HEK293 (cell line): ENCODE measurements at regions of chr9 and their contacts with region 1.

Region 1: GRCh38 chr9:115117999-115118878 is at the start of gene TNC:
- H3K4me3 ChIP-seq: peak within 1 kb of the TSS; percentile 51
- H3K27ac ChIP-seq: peak within 1 kb of the TSS; percentile 93
- H3K4me1 ChIP-seq: peaks cover 8% of the 10 kb centered on the region
- CTCF ChIP-seq: no peak

Region 2: DNA sequence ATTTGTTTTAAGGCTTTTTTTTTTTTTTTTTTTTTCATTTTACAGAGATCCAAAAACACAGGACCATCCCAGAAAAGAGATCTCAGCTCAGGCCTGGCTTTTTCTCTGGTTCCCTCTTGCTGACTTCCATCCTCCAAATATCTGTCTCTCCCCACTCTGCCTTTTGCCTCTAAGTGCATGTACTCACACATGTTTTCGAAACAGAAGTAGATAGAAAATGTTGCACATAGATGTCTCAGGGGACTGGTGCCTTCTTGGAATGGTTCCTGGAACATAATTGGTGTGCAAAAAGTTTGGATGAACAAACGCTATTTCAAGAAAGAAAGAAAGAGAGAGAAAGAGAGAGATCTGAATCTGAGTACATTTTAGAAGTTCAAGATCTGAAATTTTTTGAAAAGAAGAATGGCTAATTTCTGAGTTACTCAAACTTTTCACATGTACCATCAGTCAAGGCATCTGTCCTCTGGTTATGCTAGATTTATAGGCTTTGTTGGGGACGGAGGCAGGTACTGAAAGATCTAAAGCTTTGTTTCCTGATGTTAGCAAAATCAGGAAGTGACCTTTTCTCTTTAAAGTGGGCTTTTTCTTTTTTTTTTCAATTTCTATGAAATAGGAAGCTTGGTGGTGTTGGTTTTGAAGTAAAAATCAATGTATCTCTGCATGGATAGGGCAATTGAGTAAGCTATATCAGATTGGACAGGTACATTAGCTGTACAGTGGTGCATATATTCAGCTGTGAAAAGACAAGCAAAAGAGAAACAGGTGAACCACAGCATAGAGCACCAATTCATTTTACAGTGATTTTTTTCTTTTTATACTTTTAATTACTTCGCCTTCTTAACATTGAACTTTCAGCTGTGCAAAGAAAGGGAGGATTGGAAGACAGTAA is 179.3 kb before region 1 on chr9:
- CTCF ChIA-PET with region 1: no interaction called
- POLR2A ChIA-PET with region 1: no interaction called
- H3K4me3 ChIP-seq: no peak overlapping the region
- H3K27ac ChIP-seq: no peak overlapping the region
- H3K4me1 ChIP-seq: no peaks in the 10 kb centered on the region
- CTCF ChIP-seq: no peak

Region 3: GRCh38 chr9:115058684-115059315 is 59.4 kb before region 1 on chr9:
- CTCF ChIA-PET with region 1: no interaction called
- POLR2A ChIA-PET with region 1: no interaction called
- H3K4me3 ChIP-seq: no peak overlapping the region
- H3K27ac ChIP-seq: no peak overlapping the region
- H3K4me1 ChIP-seq: no peaks in the 10 kb centered on the region
- CTCF ChIP-seq: no peak

Region 4: GRCh38 chr9:115099901-115100300 is 18.3 kb before region 1 on chr9:
- CTCF ChIA-PET with region 1: no interaction called
- POLR2A ChIA-PET with region 1: interaction called, 21 read pairs
- H3K4me3 ChIP-seq: no peak overlapping the region
- H3K27ac ChIP-seq: no peak overlapping the region
- H3K4me1 ChIP-seq: 0 out of 2 replicates have a peak, but pooled peaks cover under 1% of the 10 kb centered on the region
- CTCF ChIP-seq: no peak